ENCODE measurements at regions of chr7 and their contacts with region 1.

Region 1: GRCh38 chr7:5653661-5654060 is 127.8 kb downstream of the RNF216 start:
- DNase-seq: no peak
- H3K4me3 ChIP-seq: no peak overlapping the region
- H3K27ac ChIP-seq: no peak overlapping the region
- H3K4me1 ChIP-seq: no peaks in the 10 kb centered on the region
- H3K27me3 ChIP-seq: no peaks in the 10 kb centered on the region
- CTCF ChIP-seq: no peak
- POLR2A ChIP-seq: no peak

Region 2: DNA sequence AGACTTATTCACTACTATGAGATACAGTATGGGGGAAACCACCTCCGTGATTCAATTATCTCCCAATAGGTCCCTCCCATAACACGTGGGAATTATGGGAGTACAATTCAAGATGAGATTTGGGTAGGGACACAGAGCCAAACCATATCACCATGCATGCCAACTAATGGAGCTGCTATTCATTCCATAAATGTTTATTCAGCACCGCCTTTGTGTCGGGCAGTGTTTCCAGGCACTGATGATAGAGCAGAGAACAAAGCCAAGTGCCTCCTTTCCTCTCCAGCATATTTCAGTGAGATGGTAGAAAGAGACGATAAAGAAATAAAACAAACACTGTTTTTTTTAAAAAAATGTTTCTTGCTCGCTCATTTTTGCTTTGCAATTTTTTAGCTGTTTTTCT is 1267.5 kb before region 1 on chr7:
- intact Hi-C with region 1: no loop called
- DNase-seq: no peak
- H3K4me3 ChIP-seq: no peak overlapping the region
- H3K27ac ChIP-seq: no peak overlapping the region
- H3K4me1 ChIP-seq: no peaks in the 10 kb centered on the region
- H3K27me3 ChIP-seq: no peaks in the 10 kb centered on the region
- CTCF ChIP-seq: no peak
- POLR2A ChIP-seq: no peak

Region 3: DNA sequence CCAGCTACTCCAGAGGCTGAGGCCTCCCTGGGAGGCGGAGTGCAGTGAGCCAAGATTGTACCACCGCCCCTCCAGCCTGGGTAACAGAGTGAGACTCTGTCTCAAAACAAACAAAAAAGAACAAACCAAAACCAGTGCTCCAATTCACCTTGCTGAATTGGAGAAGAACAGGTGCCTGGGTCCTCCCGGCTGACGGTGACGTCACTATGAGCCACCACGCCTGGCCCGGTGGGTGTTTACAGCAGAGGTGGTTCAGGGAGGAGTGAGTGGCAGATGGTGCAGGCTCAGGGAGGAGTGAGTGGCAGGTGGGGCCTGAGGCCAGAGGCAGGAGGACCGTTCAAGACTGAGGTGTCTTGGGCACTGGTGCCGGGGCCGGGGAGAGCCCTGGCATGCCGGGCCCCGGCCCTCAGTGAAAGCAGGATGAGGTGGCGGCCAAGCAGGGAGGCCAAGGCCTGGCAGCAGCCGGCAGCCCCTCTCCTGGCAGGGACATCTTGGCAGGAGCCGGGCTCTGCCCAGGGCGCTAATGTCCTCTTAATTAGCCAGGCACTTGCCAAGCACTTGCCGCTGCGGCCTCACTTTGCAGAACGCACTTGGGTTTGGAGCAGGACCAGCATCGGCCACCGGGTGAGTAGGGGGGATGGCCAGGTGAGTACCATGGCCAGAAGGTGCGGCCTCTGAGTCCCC is 67.2 kb before region 1 on chr7:
- intact Hi-C with region 1: loop called in 1 of 2 experiments (anchors 5 kb)
- DNase-seq: no peak
- H3K4me3 ChIP-seq: no peak overlapping the region
- H3K27ac ChIP-seq: no peak overlapping the region
- H3K4me1 ChIP-seq: peaks cover 0 to 3% of the 10 kb centered on the region in 2 donors
- H3K27me3 ChIP-seq: no peaks in the 10 kb centered on the region
- CTCF ChIP-seq: no peak
- POLR2A ChIP-seq: no peak

Region 4: DNA sequence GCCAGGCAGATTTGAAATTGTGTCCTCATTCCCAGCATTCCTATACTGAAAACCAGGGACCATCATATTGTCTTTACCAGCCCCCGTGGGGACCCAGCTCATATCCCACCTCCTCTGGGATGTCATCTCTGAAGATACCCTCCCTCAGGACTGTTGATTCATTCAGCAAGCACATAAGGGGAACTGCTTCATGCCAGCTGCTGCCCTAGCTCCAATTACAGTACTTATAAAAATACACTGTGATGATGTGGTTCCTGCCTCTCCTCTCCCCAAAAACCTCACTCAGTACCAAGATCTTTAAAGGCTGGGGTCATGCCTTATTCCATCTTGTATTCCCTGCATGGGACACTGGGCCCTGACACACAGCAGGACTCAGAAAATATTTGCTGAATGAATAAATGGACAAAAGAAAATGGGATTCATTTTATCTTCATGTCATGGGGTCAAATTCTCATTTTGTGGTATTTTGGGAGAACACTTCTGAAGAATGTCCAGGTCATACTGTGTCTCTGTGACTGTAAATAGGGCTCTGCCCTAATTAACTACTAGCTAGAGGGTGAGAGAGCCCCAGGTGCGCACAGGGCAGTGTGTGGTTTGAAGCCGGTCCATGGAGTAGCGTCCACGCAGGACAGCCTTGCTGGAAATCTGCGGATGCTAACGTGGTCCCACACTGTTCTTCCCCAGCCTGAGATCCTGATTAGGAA is 823.1 kb after region 1 on chr7:
- intact Hi-C with region 1: no loop called
- DNase-seq: no peak
- H3K4me3 ChIP-seq: no peak overlapping the region
- H3K27ac ChIP-seq: no peak overlapping the region
- H3K4me1 ChIP-seq: peaks cover 0 to 59% of the 10 kb centered on the region in 2 donors
- H3K27me3 ChIP-seq: no peaks in the 10 kb centered on the region
- CTCF ChIP-seq: no peak
- POLR2A ChIP-seq: no peak

Measured in adrenal gland (tissue), 19 donors.